ENCODE measurements at regions of chr4 and their contacts with region 1.

Region 1: GRCh38 chr4:65383589-65384305 is 286.5 kb downstream of the EPHA5 start:
- DNase-seq: peak; percentile 49
- H3K4me3 ChIP-seq: no peak overlapping the region
- H3K27ac ChIP-seq: peak overlapping the region; percentile 81
- H3K4me1 ChIP-seq: peaks cover 15% of the 10 kb centered on the region
- H3K27me3 ChIP-seq: no peaks in the 10 kb centered on the region
- CTCF ChIP-seq: no peak
- POLR2A ChIP-seq: no peak

Region 2: DNA sequence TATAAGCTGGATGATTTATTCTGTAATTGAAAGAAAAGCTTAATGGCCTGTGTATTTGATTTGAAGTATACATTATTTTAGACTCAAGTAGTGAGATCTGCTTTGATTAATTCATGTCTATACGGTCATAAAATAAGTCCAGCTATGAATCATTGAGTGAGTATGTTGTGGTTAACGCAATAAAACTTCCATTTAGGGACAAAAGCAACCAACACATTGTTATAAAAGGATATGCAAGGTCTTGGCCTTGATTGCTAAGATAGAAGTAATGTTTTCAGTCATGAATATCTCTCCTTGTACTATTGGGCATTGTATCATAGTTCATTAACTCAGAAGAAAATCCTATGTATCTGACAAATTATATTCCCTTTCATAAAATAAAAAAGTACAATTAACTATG is 124.4 kb after region 1 on chr4:
- CTCF ChIA-PET with region 1: no interaction called
- POLR2A ChIA-PET with region 1: no interaction called
- dilution Hi-C with region 1: no loop called
- intact Hi-C with region 1: loop called (anchors 1 kb)
- DNase-seq: peak; percentile 90
- H3K4me3 ChIP-seq: no peak overlapping the region
- H3K27ac ChIP-seq: peak overlapping the region; percentile 82
- H3K4me1 ChIP-seq: peaks cover 19% of the 10 kb centered on the region
- H3K27me3 ChIP-seq: no peaks in the 10 kb centered on the region
- CTCF ChIP-seq: no peak
- POLR2A ChIP-seq: no peak

Measured in endothelial cell of umbilical vein (primary cell).